ENCODE measurements at regions of chrX and their contacts with region 1.

Region 1: GRCh38 chrX:107776649-107777535 is 641 bp upstream of the NCBP2L start:
- DNase-seq: peak; percentile 81
- ATAC-seq: peak; percentile 80

Region 2: GRCh38 chrX:107659768-107660167 is 117.1 kb before region 1 on chrX:
- intact Hi-C with region 1: loop called (anchors 1 kb)
- DNase-seq: no peak
- ATAC-seq: peak; percentile 38

Region 3: GRCh38 chrX:107672955-107673378 is 103.9 kb before region 1 on chrX:
- intact Hi-C with region 1: loop called (anchors 2 kb)
- DNase-seq: peak; percentile 90
- ATAC-seq: peak; percentile 49

Region 4: DNA sequence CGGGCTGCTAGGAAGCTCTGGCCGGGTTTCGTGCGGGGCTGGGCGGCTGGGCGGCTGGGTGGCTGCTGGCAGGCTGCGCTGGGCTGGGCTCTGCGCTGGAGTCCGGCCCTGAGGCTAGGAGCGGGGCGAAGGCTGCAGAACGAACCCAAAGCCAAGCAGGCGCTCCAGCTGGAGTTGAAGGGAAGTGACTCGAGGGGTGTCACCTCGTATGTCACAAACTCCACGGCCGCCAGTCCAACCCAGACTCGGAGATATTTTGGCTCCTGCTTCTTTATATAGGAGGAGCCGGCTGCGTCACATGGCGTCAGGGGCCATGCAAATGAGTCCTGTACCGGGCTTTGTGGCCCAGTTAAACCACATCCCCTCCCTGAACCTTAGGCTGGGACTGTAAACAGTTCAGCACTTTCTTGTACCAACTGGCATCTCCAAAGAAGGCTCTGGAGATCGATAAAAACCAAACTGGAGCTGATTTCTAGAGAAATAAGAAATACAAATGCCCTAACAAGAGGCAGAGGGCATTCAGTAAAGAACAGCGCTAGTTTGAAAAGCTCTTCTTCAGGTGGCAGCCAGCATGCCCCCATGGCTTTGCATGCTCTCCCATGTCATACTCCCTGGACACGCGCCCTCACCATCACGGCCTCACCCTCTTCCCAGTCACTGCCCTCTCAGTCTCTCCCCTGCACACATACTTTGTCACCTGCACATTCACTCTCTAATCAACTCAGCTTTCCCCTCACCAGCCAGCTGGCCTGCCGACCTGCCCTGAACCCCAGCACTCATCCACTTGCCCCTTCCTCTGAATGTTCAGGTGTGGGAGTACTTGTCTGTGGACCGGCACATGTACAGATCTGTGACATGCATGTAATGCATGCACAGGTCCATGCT is 59.8 kb before region 1 on chrX:
- intact Hi-C with region 1: loop called (anchors 2 kb)
- DNase-seq: peak; percentile 93
- ATAC-seq: peak; percentile 77

Region 5: DNA sequence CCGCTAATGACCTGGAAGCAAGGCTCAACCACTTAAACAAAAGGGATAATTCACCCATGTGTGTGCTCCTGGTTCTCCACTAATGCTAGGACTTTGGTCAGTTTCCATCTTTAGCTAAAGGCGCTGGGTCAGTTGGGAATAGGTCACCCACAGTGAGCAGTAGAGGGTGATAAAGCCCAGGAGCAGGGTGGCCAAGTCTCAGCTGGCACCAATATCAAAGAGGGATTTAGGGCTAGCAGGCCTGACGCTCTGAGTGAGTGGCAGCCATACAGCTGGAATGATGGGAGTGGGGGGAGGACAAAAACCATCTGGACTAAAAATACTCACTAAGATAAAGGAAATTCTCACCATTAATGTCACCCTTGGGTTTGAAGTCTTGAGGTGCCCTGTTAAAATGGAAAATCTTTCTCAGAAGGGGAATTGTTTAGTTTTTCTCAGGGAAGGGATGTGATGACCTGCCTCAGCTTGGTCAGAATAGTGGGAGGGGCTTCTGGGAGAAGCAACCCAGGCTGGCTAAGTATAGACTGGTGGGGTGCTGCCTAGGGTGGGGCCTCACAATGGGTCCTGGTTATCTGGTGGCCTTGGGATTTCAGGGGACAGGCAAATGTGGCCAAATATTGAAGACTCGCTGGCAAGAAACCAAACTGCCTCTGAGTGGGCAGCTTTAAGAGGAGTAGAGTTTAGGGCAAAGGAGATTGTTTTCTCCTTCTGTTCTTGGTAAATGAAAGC is 48.4 kb before region 1 on chrX:
- intact Hi-C with region 1: loop called (anchors 1 kb)
- DNase-seq: no peak
- ATAC-seq: peak; percentile 53

Region 6: GRCh38 chrX:107894038-107894437 is 117.1 kb after region 1 on chrX:
- intact Hi-C with region 1: loop called (anchors 5 kb)
- DNase-seq: no peak
- ATAC-seq: no peak

Region 7: DNA sequence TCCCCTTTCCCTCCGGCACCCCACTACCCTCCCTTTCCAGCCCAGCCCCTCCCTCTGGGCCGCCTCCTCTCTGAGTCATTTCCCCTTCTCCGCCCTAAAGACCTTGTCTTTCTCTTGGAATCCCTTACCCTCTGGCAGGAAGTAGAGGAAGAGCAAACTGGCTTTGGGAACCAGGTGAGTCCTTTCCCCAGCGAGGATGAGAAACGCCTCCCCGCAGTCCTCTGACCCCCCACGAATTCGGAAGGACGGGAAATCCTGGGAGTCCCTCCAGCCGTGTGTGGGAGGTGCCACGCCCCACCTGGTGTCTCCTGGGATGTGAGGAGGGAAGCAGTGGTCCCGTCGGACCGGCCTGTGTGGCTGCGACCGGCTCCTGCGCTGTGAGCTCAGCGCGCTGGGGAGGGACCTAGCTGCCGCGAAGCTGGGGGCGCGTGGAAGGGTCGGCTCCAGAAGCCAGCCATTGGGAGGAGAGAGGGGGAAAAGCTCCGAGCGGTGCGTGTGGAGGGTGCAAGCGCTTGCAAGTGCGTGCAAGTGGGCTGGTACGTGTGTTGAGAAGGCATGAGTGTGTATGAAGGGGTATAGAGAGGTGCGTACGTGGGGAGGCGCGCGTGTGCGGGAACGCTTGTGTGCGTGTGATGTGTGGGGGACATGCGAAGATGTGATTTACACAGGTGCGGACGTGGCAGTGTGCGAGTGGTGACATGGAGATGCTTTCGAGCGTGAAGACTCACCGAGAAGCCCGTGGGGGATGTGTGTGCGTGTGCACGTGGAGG is 159.0 kb after region 1 on chrX:
- intact Hi-C with region 1: no loop called
- DNase-seq: no peak
- ATAC-seq: no peak

Measured in Right ventricle myocardium inferior (tissue), 1 donor.